Endothelial cell of umbilical vein (primary cell): ENCODE measurements at regions of chr3 and their contacts with region 1.

Region 1: GRCh38 chr3:185659942-185660921 is 74.1 kb downstream of the SENP2 start:
- DNase-seq: peak; percentile 84
- H3K4me3 ChIP-seq: no peak overlapping the region
- H3K27ac ChIP-seq: peak overlapping the region; percentile 48
- H3K4me1 ChIP-seq: peaks cover 55% of the 10 kb centered on the region
- H3K27me3 ChIP-seq: no peaks in the 10 kb centered on the region
- CTCF ChIP-seq: peak; percentile 98 to 99
- POLR2A ChIP-seq: no peak

Region 2: DNA sequence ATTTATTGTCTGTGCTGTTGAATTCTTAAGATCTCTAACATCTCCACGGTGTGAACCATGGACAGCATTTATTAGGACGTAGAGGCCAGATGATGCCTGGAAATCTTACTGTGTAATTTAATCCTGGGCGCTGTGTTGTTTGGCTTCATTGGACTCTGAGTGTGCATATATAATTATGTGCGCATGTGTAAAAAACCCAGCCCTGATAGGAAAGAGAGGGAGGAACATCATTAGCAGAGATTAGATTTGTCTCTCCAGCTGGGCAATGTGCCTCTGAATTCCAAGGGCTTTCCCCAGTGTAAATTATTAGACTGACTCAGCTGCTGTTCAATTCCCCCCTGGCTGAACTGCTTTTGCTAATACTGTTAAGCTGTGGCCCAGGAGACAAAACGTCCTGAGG is 257.7 kb before region 1 on chr3:
- CTCF ChIA-PET with region 1: no interaction called
- POLR2A ChIA-PET with region 1: no interaction called
- dilution Hi-C with region 1: no loop called
- intact Hi-C with region 1: no loop called
- DNase-seq: no peak
- H3K4me3 ChIP-seq: no peak overlapping the region
- H3K27ac ChIP-seq: no peak overlapping the region
- H3K4me1 ChIP-seq: no peaks in the 10 kb centered on the region
- H3K27me3 ChIP-seq: no peaks in the 10 kb centered on the region
- CTCF ChIP-seq: no peak
- POLR2A ChIP-seq: no peak

Region 3: DNA sequence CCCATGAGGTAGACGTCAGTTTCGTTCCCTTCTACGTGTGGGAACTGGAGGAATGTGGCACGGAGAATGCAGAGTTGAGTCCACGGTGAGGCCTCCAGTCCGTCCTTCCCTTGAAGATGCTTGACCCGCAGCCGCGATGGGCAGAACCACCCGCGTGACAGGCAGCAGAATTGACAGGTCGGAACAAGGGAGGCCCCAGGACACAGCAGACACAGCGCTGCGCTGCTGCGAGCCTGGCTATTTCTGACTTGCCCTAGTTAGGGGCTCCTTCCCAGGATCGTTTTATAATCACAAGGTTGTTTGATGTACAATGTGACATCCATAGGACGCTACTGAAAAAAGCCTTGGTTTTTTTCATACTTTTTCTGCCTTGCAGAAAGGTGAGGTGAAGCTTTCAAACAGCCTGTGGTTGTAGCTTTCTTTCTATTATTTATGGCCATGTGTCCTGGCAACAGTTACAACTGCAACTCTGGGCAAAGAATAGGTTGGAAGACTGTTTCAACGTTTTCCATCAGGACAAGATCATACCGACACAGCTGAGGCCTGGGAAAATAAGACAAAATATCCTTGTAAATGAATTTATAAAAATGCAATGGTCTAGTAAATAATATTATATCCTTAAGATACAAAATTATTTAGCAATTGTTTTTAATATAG is 151.8 kb before region 1 on chr3:
- CTCF ChIA-PET with region 1: no interaction called
- POLR2A ChIA-PET with region 1: no interaction called
- dilution Hi-C with region 1: no loop called
- intact Hi-C with region 1: no loop called
- DNase-seq: no peak
- H3K4me3 ChIP-seq: no peak overlapping the region
- H3K27ac ChIP-seq: no peak overlapping the region
- H3K4me1 ChIP-seq: no peaks in the 10 kb centered on the region
- H3K27me3 ChIP-seq: peaks cover 0 to 2% of the 10 kb centered on the region in 2 experiments
- CTCF ChIP-seq: no peak
- POLR2A ChIP-seq: no peak

Region 4: GRCh38 chr3:185687271-185687878 is 27.1 kb after region 1 on chr3:
- CTCF ChIA-PET with region 1: interaction called, 13 read pairs
- POLR2A ChIA-PET with region 1: no interaction called
- dilution Hi-C with region 1: no loop called
- intact Hi-C with region 1: loop called (anchors 2 kb)
- DNase-seq: no peak
- H3K4me3 ChIP-seq: no peak overlapping the region
- H3K27ac ChIP-seq: peak overlapping the region; percentile 93
- H3K4me1 ChIP-seq: peaks cover 19% of the 10 kb centered on the region
- H3K27me3 ChIP-seq: no peaks in the 10 kb centered on the region
- CTCF ChIP-seq: no peak
- POLR2A ChIP-seq: no peak

Region 5: GRCh38 chr3:185733980-185734724 is 73.9 kb after region 1 on chr3:
- CTCF ChIA-PET with region 1: interaction called, 97 read pairs
- POLR2A ChIA-PET with region 1: interaction called, 6 read pairs
- dilution Hi-C with region 1: no loop called
- intact Hi-C with region 1: loop called (anchors 1 kb)
- DNase-seq: peak; percentile 87
- H3K4me3 ChIP-seq: no peak overlapping the region
- H3K27ac ChIP-seq: peak overlapping the region; percentile 100
- H3K4me1 ChIP-seq: peaks cover 93% of the 10 kb centered on the region
- H3K27me3 ChIP-seq: no peaks in the 10 kb centered on the region
- CTCF ChIP-seq: peak; percentile 56 to 62
- POLR2A ChIP-seq: no peak

Region 6: DNA sequence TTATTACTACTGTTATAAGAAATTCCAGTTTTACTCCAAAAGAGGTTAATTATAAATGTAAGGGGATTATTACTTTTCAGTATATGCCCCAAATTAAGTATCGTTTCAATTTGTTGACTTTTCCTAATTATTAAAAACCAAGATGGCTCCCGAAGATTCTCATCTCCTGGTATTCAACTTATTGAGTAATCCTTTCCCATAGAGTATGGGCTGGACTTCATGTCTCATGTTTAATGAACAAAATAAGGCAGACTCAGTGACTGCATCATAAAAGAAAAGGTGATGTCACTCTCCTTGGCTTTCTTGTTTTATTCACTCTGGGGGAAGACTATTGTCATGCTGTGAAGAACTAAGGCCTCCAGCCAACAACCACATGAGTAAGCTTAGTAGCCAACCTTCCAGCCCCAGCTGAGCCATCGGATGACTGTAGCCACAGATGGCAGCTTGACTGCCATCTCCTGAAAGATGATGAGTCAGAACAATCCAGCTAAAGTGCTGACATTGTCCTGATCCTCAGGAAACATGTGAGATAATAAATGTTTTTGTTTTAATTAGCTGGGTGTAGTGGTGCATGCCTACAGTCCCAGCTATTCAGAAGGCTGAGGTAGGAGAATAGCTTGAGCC is 147.3 kb after region 1 on chr3:
- CTCF ChIA-PET with region 1: interaction called, 12 read pairs
- POLR2A ChIA-PET with region 1: no interaction called
- dilution Hi-C with region 1: no loop called
- intact Hi-C with region 1: no loop called
- DNase-seq: peak; percentile 84
- H3K4me3 ChIP-seq: no peak overlapping the region
- H3K27ac ChIP-seq: peak overlapping the region; percentile 9
- H3K4me1 ChIP-seq: no peaks in the 10 kb centered on the region
- H3K27me3 ChIP-seq: no peaks in the 10 kb centered on the region
- CTCF ChIP-seq: no peak
- POLR2A ChIP-seq: no peak

Region 7: DNA sequence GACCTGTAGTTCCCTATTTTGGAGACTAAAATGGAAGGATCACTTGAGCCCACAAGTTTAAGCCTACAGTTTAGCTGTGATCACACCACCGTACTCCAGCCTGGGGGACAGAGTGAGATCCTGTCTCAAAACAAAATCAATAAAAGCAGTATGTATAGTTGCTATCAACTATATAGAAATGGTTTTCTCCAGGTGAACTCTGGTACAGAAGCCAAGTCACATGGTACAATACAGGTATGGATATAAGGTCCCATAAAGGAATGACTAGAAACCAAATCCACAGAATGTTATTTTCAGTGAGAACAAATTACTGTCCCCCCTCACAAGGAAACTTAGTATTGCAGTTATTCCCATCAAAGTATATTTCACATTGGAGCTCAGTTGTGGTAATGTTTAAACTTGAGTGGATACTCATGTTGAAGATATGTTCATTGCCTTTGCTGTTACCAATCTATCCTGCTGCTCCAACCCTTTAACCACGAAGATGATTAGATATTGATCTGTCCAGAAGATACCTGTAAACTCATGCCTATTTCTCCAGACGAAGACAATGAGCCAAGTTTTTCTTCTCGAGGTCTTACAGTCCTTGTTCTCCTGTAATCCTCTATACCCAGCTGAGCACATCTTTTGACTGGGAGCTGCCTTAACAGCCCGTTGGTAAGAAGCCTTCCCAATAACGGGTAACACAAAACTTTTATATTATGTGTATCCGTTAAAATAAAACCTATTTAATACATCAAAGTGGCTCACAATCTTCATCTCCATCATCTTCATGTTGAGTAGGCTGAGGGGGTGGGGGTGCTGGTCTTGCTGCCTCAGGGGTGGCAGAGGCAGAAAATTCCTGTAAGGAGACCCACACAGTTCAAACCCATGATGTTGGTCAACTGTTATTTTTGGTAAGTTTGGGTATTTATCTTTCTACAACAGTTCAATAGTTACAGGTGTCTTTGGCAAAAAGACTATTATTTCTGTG is 253.0 kb after region 1 on chr3:
- CTCF ChIA-PET with region 1: interaction called, 78 read pairs
- POLR2A ChIA-PET with region 1: no interaction called
- dilution Hi-C with region 1: no loop called
- intact Hi-C with region 1: loop called (anchors 2 kb)
- DNase-seq: no peak
- H3K4me3 ChIP-seq: no peak overlapping the region
- H3K27ac ChIP-seq: no peak overlapping the region
- H3K4me1 ChIP-seq: no peaks in the 10 kb centered on the region
- H3K27me3 ChIP-seq: no peaks in the 10 kb centered on the region
- CTCF ChIP-seq: no peak
- POLR2A ChIP-seq: peak; percentile 65

Region 8: DNA sequence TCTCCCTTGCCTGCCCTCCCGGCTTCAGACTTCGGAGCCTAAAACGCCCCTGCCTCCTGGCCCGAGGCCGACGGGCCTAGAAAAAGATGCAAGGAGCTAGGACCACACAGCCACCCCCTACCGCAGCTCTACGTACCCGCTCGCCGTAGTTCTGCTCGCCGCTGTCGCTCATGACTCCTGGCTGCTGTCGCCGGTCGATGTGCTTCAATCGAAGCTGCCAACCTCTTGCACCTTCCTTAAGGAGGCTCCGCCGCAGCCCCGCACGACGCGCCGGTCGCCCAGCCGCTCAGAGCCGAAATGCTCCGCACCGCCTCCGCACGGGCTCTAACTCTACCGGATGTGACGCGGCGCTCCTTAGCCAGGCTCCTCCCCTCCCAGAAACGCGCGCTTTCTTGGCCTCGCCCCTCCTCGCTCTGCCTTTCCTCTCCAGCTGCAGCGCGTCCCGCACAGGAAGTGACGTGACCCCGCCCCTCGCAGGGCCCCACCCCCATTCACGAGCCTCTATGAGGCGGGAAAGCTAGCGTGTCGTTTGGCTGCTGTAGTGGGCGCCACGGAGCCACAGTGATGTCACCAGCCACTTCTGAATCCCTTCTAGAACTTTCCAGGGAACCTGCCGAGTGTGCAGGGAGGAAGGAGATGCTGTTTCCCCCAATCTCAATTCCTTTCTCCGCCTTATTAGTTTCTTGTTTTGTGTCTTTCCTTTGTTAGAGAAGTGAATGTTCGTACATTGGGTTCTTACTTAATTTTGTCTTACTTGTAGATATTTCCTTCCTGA is 277.6 kb after region 1 on chr3 and contains the start of gene TRA2B:
- CTCF ChIA-PET with region 1: interaction called, 68 read pairs
- POLR2A ChIA-PET with region 1: interaction called, 5 read pairs
- dilution Hi-C with region 1: no loop called
- intact Hi-C with region 1: loop called (anchors 2 kb)
- DNase-seq: peak; percentile 99
- H3K4me3 ChIP-seq: peak within 1 kb of the TSS; percentile 41 to 98 (median 97)
- H3K27ac ChIP-seq: peak within 1 kb of the TSS; percentile 76
- H3K4me1 ChIP-seq: peaks cover 26% of the 10 kb centered on the region
- H3K27me3 ChIP-seq: peaks cover 0 to 3% of the 10 kb centered on the region in 2 experiments
- CTCF ChIP-seq: peak in 1 of 2 donors; percentile 38
- POLR2A ChIP-seq: peak; percentile 99
- total RNA-seq, gene TRA2B: 199 and 214 TPM in 2 replicates

Region 9: DNA sequence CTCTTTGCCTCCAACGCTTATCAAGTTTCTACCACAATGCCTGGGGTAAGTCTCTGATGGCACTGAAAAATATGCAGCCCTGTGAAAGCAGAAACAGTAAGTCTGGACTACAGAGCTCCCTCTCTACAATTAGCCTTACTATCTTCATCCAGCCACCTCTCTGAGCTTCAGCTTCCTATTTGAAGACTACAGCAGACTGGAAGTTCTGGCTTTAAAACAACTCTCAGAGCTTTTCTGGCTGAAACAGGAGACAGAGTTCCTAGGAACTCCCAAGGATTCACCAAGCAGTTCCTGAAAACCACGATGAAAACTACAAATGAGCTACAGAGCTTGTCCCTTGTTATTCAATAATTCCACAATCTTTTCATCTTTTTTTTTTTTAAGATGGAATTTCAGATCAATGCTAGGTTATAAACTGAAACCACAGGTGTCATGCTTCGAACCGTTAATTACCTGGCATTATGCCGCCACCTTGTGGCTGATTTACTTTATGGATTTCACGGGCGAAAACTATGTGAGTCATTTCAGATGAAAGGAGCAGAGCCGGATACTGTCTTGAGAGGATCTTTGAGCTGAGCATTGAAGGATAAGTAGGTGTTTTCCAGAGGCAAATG is 880.1 kb after region 1 on chr3:
- CTCF ChIA-PET with region 1: no interaction called
- POLR2A ChIA-PET with region 1: no interaction called
- dilution Hi-C with region 1: no loop called
- intact Hi-C with region 1: loop called (anchors 10 kb)
- DNase-seq: peak; percentile 82
- H3K4me3 ChIP-seq: no peak overlapping the region
- H3K27ac ChIP-seq: peak overlapping the region; percentile 46
- H3K4me1 ChIP-seq: peaks cover 20% of the 10 kb centered on the region
- H3K27me3 ChIP-seq: no peaks in the 10 kb centered on the region
- CTCF ChIP-seq: peak; percentile 43 to 66
- POLR2A ChIP-seq: no peak